ENCODE measurements at regions of chr9 and their contacts with region 1.

Region 1: GRCh38 chr9:114405294-114406034 is 17.7 kb upstream of the AKNA start:
- DNase-seq: peak; percentile 62 to 91 (median 78)
- ATAC-seq: peak; percentile 100
- H3K4me3 Mint-ChIP-seq: no peak overlapping the region
- H3K27ac Mint-ChIP-seq: peak overlapping the region in 9 of 10 donors; percentile 2 to 87 (median 62)
- H3K4me1 Mint-ChIP-seq: peaks cover 7 to 8% (median 7%) of the 10 kb centered on the region in 4 donors
- H3K27me3 Mint-ChIP-seq: no peaks in the 10 kb centered on the region

Region 2: DNA sequence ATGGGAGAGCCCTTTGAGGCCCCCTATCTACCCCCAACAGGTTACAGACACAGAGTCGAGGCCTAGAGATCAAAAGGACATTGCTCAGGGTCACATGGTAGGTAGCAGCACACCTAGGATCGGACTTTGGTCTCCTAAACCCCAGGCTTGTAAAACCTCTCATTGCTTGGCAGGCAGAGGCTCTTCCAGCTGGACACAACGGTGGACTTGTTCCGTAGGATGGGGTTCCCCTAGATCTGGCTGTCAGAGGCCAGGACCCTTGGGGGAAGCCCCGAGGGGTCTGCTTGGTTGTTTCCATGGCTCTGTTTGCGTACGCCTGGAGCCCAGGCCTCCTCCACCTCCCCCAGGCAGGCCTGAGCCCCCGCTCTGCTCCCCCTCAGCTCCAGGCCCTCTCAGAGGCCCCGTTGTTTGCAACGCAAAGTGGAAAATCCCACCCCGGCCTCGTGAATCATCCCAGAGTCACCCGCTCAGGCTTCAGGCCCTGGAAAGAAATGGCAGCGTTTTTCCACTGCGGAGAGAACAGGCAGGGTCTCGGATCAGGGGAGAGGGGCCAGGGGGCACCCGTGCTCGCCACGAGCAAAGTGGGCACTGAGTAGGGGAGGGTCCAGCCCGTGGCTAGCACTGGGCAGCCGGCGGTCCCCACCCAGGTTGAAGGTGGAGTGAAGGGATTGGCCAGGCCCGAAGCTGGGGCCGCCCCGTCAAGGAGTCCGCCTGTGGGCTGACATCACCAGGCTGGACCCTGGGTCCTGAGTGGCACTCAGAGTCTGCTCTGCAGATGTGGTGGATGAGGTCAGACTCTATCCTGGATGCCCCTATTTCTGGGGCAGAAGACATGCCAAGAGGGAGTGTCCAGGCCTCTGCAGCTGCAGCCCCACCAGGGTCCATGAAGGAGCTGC is 230.3 kb before region 1 on chr9:
- POLR2A ChIA-PET with region 1: no interaction called
- DNase-seq: no peak
- ATAC-seq: no peak
- H3K4me3 Mint-ChIP-seq: no peak overlapping the region
- H3K27ac Mint-ChIP-seq: no peak overlapping the region
- H3K4me1 Mint-ChIP-seq: peaks cover 0 to 1% (median 0%) of the 10 kb centered on the region in 4 donors
- H3K27me3 Mint-ChIP-seq: peaks cover 0 to 3% (median 0%) of the 10 kb centered on the region in 5 donors

Region 3: DNA sequence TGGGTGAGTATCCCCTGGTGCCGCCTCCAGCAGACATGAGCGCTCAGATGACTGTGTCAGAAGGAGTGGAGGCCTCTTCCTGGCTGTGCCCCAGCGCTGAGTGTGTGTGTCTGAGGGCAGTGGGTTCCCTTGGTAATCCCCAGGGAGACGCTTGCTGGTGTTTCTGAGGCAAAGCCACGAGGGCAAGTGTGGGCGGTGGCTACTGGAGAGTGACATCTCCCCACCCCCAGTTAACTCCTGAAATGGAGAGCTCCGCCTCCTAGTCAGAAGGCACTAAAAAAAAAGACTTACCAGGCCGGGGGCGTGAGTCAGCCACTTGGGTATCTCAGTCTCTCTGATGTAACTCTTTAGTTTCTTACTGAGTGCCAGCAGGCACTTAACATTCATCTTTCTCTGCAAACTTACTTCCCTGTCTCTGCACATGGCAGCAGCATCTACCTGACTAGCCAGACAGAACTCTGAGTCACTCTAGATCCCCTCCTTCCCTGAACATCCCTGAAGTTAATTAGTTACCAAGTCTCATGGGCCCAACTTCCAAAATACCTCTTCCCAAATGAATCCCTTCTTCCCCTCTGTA is 56.5 kb before region 1 on chr9:
- POLR2A ChIA-PET with region 1: interaction called, 1,589 read pairs
- DNase-seq: peak in 9 of 10 donors; percentile 37 to 83 (median 59)
- ATAC-seq: peak; percentile 81 to 82
- H3K4me3 Mint-ChIP-seq: peak overlapping the region in 9 of 10 donors; percentile 37 to 81 (median 67)
- H3K27ac Mint-ChIP-seq: peak overlapping the region; percentile 84 to 96 (median 93)
- H3K4me1 Mint-ChIP-seq: peaks cover 28 to 66% (median 52%) of the 10 kb centered on the region in 4 donors
- H3K27me3 Mint-ChIP-seq: no peaks in the 10 kb centered on the region

Region 4: GRCh38 chr9:114653556-114654159 is 248.2 kb after region 1 on chr9:
- POLR2A ChIA-PET with region 1: interaction called, 41 read pairs
- DNase-seq: peak; percentile 57 to 92 (median 80)
- ATAC-seq: peak; percentile 89 to 91
- H3K4me3 Mint-ChIP-seq: no peak overlapping the region
- H3K27ac Mint-ChIP-seq: peak overlapping the region in 6 of 10 donors; percentile 30 to 74 (median 52)
- H3K4me1 Mint-ChIP-seq: peaks cover 10 to 21% (median 20%) of the 10 kb centered on the region in 4 donors
- H3K27me3 Mint-ChIP-seq: no peaks in the 10 kb centered on the region

Measured in naive thymus-derived CD8-positive, alpha-beta T cell (primary cell).